HepG2 (cell line): ENCODE measurements at regions of chr9 and their contacts with region 1.

Region 1: GRCh38 chr9:136051517-136052432 is 43.3 kb downstream of the NACC2 start:
- DNase-seq: peak; percentile 96
- ATAC-seq: peak; percentile 80
- H3K4me3 ChIP-seq: peak overlapping the region; percentile 49 to 72 (median 67); a peak in 5 of 6 replicates
- H3K27ac ChIP-seq: peak overlapping the region; percentile 75
- H3K4me1 ChIP-seq: peaks cover 33% of the 10 kb centered on the region
- H3K27me3 ChIP-seq: no peaks in the 10 kb centered on the region
- CTCF ChIP-seq: no peak
- EP300 ChIP-seq: peak in 1 of 2 experiments; percentile 57; a peak in 1 of 4 replicates
- POLR2A ChIP-seq: peak in 1 of 2 experiments; percentile 61; a peak in 2 of 4 replicates
- RAD21 ChIP-seq: no peak

Region 2: GRCh38 chr9:136011703-136012521 is 39.9 kb before region 1 on chr9:
- CTCF ChIA-PET with region 1: no interaction called
- POLR2A ChIA-PET with region 1: interaction called, 17 read pairs
- in situ Hi-C with region 1: no loop called
- intact Hi-C with region 1: loop called (anchors 5 kb)
- DNase-seq: peak; percentile 97
- ATAC-seq: peak; percentile 89
- H3K4me3 ChIP-seq: peak overlapping the region; percentile 28 to 66 (median 38); a peak in 5 of 6 replicates
- H3K27ac ChIP-seq: peak overlapping the region; percentile 88
- H3K4me1 ChIP-seq: peaks cover 93% of the 10 kb centered on the region
- H3K27me3 ChIP-seq: no peaks in the 10 kb centered on the region
- CTCF ChIP-seq: peak; percentile 23
- EP300 ChIP-seq: peak in 1 of 2 experiments; percentile 71; a peak in 2 of 4 replicates
- POLR2A ChIP-seq: peak in 1 of 2 experiments; percentile 55; a peak in 1 of 4 replicates
- RAD21 ChIP-seq: peak; percentile 54

Region 3: GRCh38 chr9:136093995-136094881 is 42.5 kb after region 1 on chr9:
- CTCF ChIA-PET with region 1: no interaction called
- POLR2A ChIA-PET with region 1: interaction called, 14 read pairs
- in situ Hi-C with region 1: no loop called
- intact Hi-C with region 1: loop called (anchors 5 kb)
- DNase-seq: peak; percentile 72
- ATAC-seq: peak; percentile 69
- H3K4me3 ChIP-seq: peak overlapping the region; percentile 74 to 81 (median 81)
- H3K27ac ChIP-seq: peak overlapping the region; percentile 82
- H3K4me1 ChIP-seq: peaks cover 56% of the 10 kb centered on the region
- H3K27me3 ChIP-seq: peaks cover 7 to 20% of the 10 kb centered on the region in 2 experiments; a peak in 4 of 5 replicates
- CTCF ChIP-seq: peak; percentile 31
- EP300 ChIP-seq: no peak; a peak in 1 of 4 replicates
- POLR2A ChIP-seq: peak in 1 of 2 experiments; percentile 57; a peak in 1 of 4 replicates
- RAD21 ChIP-seq: peak; percentile 40